ENCODE measurements at regions of chr4 and their contacts with region 1.

Region 1: DNA sequence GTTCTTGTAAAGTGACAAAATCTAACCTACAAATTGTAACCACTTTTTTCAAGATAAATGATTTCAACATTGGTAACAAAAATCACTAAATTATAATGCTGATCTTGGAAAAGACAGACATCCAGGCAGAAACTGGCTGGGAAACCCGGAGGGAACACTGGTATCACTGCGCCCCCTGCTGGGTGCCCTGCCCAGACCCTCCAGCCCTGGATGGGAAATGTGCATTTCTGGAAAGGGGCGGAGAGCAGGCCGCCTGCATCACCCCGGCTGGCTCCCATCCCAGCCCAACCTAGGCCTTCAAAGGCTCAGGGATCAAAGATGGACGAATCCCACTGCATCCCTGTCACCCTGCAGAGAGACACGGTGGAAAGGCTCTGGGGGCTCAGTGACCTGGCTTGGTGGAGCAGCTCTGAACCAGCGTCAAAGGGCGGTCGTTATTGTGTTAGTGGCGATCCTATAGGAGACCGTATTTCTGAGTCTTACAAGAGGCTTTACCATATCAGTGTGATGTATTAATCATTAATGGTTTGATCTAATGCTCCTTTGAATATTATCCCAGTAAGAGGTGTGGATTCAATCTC is 37.3 kb downstream of the ACOX3 start:
- DNase-seq: peak; percentile 91
- ATAC-seq: peak; percentile 82 to 85

Region 2: DNA sequence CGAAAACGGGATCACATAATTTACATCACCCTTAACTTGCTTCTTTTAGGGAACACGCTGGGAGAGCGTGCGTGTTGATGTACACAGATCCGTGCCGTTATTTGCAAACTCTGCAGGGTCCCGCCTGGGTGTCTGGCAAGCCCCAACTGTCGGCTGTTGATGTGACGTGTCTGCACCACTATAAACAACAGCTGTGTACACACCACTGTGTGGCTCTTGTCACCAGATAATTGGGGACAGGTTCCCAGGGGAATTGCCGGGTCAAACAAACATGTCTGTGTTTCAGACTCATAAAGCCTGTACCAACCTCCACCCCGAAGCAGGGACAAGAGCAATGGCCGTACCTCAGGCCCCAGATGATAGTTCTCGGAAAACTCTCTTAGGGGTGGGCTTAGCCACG is 358.6 kb before region 1 on chr4:
- intact Hi-C with region 1: no loop called
- DNase-seq: no peak
- ATAC-seq: no peak

Region 3: DNA sequence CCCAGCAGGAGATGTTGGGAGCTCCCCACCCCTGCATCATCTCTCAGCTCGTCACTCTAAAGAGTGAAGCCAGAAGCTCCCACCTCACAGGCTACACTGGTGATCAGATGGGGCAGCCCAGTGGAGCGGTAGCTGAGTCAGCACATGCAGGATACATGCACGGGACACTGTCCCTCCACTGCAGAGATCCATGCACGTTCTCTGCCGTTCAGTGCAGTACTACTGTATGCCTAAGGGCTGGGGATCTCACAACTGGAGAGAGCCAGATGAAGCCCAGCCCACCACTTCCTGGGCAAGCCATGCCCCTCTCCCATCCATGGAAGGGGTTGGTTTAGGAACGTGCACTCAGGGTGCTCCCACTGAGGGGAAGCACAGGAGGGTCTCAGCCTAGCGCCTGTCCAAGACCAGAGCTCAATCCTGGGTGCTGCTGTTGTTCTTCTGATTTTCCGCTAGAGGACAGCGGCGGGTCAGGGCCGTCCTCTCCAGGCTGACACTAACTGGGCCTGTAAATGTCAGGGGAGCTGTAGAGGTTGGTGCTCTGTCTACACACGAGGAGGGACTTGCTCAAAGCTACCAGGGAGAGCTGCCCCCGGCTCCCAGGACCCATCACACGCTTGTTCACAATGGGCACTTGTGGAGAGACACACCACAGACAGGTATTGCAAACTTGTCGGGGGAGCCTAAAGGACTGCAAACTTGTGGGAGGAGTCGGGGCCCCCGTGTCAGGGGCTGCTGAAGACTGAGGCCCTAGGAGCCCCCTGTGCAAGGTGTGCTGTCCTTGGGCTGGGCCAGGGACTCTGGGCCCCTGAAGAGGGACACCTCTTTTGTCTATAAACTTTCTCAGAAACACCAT is 226.5 kb before region 1 on chr4:
- intact Hi-C with region 1: loop called in 1 of 2 experiments (anchors 5 kb)
- DNase-seq: peak; percentile 54
- ATAC-seq: peak; percentile 81 to 86

Region 4: GRCh38 chr4:8241895-8242696 is 161.2 kb before region 1 on chr4:
- intact Hi-C with region 1: loop called (anchors 1 to 5 kb)
- DNase-seq: peak; percentile 92
- ATAC-seq: peak; percentile 82 to 87

Region 5: DNA sequence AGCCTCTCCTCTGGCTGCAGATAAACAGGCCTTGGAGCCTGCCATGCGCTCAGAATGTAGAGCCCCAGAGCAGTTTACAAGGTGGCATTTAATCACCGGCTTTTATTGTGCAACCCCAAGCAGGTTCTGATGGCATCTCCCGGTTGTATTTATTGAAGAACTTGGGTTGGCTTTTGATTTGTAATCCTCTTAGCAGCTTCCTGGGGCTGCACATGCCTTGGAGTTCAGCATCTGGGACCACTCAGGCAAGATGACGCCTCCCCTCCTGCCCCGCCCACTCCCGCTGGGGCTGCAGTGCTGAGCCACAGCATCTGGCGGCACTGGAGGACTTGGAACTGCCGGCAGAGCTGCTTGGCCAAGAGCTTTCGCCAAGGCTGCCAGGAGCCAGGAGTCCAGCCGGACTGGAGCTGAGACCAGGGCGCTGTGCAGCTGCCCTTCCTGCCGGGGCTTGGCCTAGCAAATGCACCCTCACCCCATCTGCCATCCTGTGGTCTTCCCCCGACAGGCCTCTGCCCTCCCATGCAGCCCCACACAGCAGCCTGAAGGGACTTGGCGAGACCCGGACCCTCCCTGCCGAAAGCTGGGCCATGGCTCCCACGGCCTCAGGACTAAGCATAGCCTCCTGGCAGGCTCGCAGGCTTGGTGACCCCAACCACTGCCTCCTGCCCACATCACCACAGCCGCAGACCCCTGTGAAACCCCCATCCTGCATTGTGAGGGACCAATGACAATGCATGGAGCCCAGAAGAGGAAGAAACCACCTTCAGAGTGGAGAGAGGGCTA is 128.3 kb before region 1 on chr4:
- intact Hi-C with region 1: loop called (anchors 2 to 10 kb)
- DNase-seq: peak; percentile 90
- ATAC-seq: peak; percentile 73 to 83

Region 6: DNA sequence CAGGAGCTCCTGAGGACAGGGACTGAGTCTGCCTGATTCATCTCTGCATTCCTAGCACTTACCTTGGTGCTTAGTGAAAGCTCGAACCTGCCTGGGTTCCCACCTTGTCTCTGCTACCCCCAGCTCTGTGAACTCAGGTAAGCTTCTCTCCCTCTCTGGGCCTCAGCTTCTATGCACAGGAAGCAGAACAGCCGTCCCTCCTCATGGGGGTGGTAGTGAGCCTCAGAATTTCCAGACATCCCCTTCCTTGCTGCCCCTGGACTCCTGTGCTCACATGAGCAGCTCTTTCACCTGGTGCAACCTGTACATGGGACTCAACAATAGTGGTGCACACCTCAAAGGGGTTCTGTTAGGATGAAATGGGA is 82.9 kb before region 1 on chr4:
- intact Hi-C with region 1: loop called in 1 of 2 experiments (anchors 5 kb)
- DNase-seq: peak; percentile 15
- ATAC-seq: peak in 1 of 2 donors; percentile 17

Measured in left cardiac atrium (tissue), 4 donors.